CD4-positive, alpha-beta memory T cell (primary cell): ENCODE measurements at regions of chr16 and their contacts with region 1.

Region 1: DNA sequence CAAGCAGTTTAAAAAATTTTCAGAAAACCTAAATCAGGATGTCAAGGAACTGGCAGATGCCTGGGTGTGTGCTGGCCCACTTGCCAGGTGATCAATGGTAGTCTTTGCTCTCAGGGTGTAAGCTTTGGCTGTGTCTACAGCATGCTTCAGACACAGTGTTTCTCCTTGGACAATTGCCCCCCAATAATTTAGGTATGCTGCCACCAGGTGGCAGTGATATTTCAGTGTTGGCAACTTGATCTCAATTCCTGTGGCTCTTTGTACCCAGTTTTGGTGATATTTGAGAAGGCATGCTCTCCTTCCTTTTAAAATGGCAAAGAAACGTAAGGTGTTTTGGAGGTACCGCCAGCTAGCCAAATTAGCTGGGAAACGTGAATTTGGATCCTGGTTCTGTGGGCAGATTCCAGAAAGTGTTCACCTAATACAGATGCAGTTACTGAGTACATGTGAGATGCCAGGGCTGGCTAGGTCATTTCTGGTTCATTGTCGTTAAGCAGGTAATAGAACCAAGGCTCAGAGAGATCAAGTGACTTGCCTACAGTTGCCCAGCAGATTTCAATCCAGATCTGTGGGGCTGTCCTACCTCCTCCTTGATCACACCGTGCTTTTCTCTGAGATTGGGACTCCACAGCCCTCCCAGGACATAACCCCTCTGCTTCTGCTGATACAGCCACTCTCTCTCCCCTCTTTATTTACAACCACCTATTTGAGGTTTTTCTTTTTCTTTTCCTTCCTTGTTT is 155.6 kb upstream of the PLCG2 start:
- DNase-seq: peak in 4 of 5 donors; percentile 52 to 61 (median 58)
- H3K4me3 ChIP-seq: no peak overlapping the region
- H3K4me3 Mint-ChIP-seq: no peak overlapping the region
- H3K27ac ChIP-seq: no peak overlapping the region
- H3K27ac Mint-ChIP-seq: peak overlapping the region; percentile 6 to 89 (median 72)
- H3K4me1 ChIP-seq: peaks cover 6% of the 10 kb centered on the region
- H3K4me1 Mint-ChIP-seq: peaks cover 4 to 9% (median 7%) of the 10 kb centered on the region in 4 donors
- H3K27me3 ChIP-seq: no peaks in the 10 kb centered on the region
- H3K27me3 Mint-ChIP-seq: no peaks in the 10 kb centered on the region

Region 2: DNA sequence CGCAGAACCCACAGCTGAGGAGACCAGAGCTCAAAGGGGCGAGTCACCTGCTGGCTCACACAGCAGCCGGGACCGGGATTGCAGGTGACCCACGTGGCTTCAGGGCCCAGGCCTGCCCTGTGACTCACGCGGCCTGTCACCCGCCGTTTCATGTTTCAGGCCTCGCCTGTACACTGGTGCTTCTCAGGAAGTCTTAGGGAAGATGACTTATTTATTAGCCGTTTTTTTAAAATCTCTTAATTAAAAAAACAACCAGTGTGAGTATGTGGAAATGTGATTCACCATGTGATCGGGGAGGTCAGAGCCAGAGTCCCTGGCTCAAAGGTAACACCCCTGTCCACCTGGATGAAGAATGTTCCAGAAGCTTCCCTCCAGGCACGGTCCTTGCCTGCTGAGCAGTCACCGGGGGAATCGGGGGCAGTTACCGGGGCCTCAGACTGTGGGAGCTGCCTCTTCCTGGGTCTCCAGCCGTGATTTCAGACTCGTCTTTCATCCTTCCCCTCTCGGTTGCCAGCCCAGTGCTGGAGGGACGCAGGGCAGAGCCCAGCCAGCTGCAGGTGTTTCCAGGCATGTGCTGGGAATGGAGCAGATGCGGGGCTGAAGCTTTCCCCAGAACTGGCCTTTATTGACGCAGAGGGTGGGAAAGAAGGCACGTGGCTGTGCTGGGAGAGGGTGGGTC is 129.6 kb before region 1 on chr16:
- CTCF ChIA-PET with region 1: no interaction called
- POLR2A ChIA-PET with region 1: no interaction called
- intact Hi-C with region 1: no loop called
- DNase-seq: no peak
- H3K4me3 ChIP-seq: no peak overlapping the region
- H3K4me3 Mint-ChIP-seq: no peak overlapping the region
- H3K27ac ChIP-seq: no peak overlapping the region
- H3K27ac Mint-ChIP-seq: peak overlapping the region in 5 of 7 donors; percentile 13 to 85 (median 32)
- H3K4me1 ChIP-seq: peaks cover 14% of the 10 kb centered on the region
- H3K4me1 Mint-ChIP-seq: peaks cover 18 to 54% (median 40%) of the 10 kb centered on the region in 4 donors
- H3K27me3 ChIP-seq: no peaks in the 10 kb centered on the region
- H3K27me3 Mint-ChIP-seq: no peaks in the 10 kb centered on the region

Region 3: GRCh38 chr16:81680444-81681275 is 57.1 kb after region 1 on chr16:
- CTCF ChIA-PET with region 1: no interaction called
- POLR2A ChIA-PET with region 1: no interaction called
- intact Hi-C with region 1: no loop called
- DNase-seq: no peak
- H3K4me3 ChIP-seq: no peak overlapping the region
- H3K4me3 Mint-ChIP-seq: no peak overlapping the region
- H3K27ac ChIP-seq: no peak overlapping the region
- H3K27ac Mint-ChIP-seq: peak overlapping the region in 1 of 7 donors; percentile 63
- H3K4me1 ChIP-seq: no peaks in the 10 kb centered on the region
- H3K4me1 Mint-ChIP-seq: peaks cover 3 to 25% (median 11%) of the 10 kb centered on the region in 4 donors
- H3K27me3 ChIP-seq: no peaks in the 10 kb centered on the region
- H3K27me3 Mint-ChIP-seq: no peaks in the 10 kb centered on the region

Region 4: GRCh38 chr16:81696961-81697615 is 73.6 kb after region 1 on chr16:
- CTCF ChIA-PET with region 1: interaction called, 34 read pairs
- POLR2A ChIA-PET with region 1: interaction called, 3 read pairs
- intact Hi-C with region 1: loop called (anchors 1 kb)
- DNase-seq: peak in 3 of 5 donors; percentile 19 to 39 (median 28)
- H3K4me3 ChIP-seq: no peak overlapping the region
- H3K4me3 Mint-ChIP-seq: no peak overlapping the region
- H3K27ac ChIP-seq: no peak overlapping the region
- H3K27ac Mint-ChIP-seq: peak overlapping the region in 3 of 7 donors; percentile 17 to 76 (median 57)
- H3K4me1 ChIP-seq: no peaks in the 10 kb centered on the region
- H3K4me1 Mint-ChIP-seq: peaks cover 0 to 5% (median under 1%) of the 10 kb centered on the region in 4 donors
- H3K27me3 ChIP-seq: no peaks in the 10 kb centered on the region
- H3K27me3 Mint-ChIP-seq: no peaks in the 10 kb centered on the region

Region 5: GRCh38 chr16:81715358-81716196 is 92.0 kb after region 1 on chr16:
- CTCF ChIA-PET with region 1: interaction called, 38 read pairs
- POLR2A ChIA-PET with region 1: interaction called, 13 read pairs
- intact Hi-C with region 1: loop called (anchors 1 kb)
- DNase-seq: peak; percentile 73 to 82 (median 75)
- H3K4me3 ChIP-seq: peak overlapping the region in 1 of 2 donors; percentile 48
- H3K4me3 Mint-ChIP-seq: peak overlapping the region; percentile 74 to 91 (median 84)
- H3K27ac ChIP-seq: peak overlapping the region; percentile 45
- H3K27ac Mint-ChIP-seq: peak overlapping the region; percentile 86 to 97 (median 95)
- H3K4me1 ChIP-seq: peaks cover 49% of the 10 kb centered on the region
- H3K4me1 Mint-ChIP-seq: peaks cover 37 to 54% (median 47%) of the 10 kb centered on the region in 4 donors
- H3K27me3 ChIP-seq: no peaks in the 10 kb centered on the region
- H3K27me3 Mint-ChIP-seq: no peaks in the 10 kb centered on the region

Region 6: DNA sequence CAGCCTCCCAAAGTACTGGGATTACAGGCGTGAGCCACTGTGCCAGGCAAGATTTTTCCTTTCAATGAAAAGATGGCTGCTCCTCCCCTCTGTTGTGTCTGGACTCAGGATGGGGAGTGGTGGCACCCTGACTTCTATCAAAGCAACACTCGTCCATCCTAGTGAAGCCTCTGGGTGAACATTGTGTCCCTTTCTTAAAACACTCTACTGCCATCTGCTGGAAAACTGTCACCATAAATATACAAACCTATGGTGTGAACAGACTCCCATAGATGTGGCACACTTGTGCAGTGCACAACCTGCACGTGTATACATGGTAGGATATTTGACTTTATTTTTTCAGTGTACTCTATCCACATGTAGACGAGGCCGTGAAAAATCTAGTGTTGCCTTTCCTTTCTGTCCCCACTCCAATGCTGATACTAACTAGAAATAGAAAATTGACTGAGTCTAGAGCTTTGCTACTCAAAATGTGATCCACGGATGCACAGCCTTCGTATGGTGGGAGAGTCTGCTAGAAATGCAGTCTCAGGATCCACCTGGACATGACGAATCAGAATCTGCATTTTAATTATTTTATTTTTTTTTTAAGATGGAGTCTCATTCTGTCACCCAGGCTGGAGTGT is 99.7 kb after region 1 on chr16:
- CTCF ChIA-PET with region 1: interaction called, 112 read pairs
- POLR2A ChIA-PET with region 1: interaction called, 13 read pairs
- intact Hi-C with region 1: loop called (anchors 1 kb)
- DNase-seq: peak; percentile 61 to 76 (median 73)
- H3K4me3 ChIP-seq: no peak overlapping the region
- H3K4me3 Mint-ChIP-seq: peak overlapping the region in 1 of 8 donors; percentile 52
- H3K27ac ChIP-seq: no peak overlapping the region
- H3K27ac Mint-ChIP-seq: peak overlapping the region in 4 of 7 donors; percentile 14 to 84 (median 70)
- H3K4me1 ChIP-seq: peaks cover 11% of the 10 kb centered on the region
- H3K4me1 Mint-ChIP-seq: peaks cover 11 to 29% (median 13%) of the 10 kb centered on the region in 4 donors
- H3K27me3 ChIP-seq: no peaks in the 10 kb centered on the region
- H3K27me3 Mint-ChIP-seq: no peaks in the 10 kb centered on the region

Region 7: DNA sequence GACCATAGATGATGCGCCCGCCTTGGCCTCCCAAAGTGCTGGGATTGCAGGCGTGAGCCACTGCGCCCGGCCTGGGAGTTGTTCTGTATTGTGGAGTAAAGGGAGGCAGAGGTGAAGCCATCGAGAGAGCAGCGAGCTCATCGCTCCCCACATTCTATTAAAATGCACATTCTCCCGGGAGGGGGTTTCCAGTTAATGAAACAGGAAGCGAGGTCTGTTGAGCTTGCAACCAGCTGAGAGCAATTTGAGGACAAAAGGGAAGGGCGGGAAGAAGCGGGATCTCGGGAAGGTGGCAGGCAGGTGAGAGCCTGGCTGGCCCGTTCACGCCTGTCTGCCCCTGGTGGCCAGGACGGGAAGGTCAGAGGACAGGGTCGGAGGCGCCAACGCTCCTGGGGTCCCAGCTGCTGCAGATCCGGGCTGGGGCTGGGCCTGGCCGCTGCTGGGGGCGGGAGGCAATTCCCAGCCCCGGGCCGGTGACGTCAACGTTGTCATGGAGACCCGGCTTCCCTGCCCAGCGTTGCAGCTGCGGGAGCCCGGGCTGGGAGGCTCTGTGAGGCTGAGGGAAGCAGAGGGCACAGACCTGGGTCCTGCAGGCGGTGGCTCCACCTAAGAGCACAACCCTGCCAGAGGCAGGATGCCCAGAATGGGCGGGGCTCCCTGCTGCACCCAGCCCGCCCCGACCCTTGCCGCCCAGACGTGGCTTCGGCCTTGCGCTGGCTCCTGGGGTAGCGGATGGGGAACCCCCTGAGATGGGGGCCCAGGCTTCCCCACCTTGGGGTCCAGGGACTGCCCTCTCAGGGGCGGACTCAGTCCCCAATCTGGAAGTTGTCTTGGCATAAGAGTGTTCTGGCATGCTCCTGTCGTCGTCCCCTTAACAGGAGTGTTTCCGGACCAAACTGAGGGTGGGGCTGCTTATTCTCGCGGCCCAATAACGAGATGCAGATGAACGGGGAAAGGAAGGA is 106.8 kb after region 1 on chr16:
- CTCF ChIA-PET with region 1: interaction called, 112 read pairs
- POLR2A ChIA-PET with region 1: no interaction called
- intact Hi-C with region 1: loop called (anchors 2 kb)
- DNase-seq: peak; percentile 42 to 73 (median 58)
- H3K4me3 ChIP-seq: peak overlapping the region; percentile 11 to 25
- H3K4me3 Mint-ChIP-seq: peak overlapping the region; percentile 85 to 93 (median 88)
- H3K27ac ChIP-seq: peak overlapping the region; percentile 65
- H3K27ac Mint-ChIP-seq: peak overlapping the region; percentile 78 to 97 (median 93)
- H3K4me1 ChIP-seq: peaks cover 12% of the 10 kb centered on the region
- H3K4me1 Mint-ChIP-seq: peaks cover 8 to 25% (median 17%) of the 10 kb centered on the region in 4 donors
- H3K27me3 ChIP-seq: no peaks in the 10 kb centered on the region
- H3K27me3 Mint-ChIP-seq: no peaks in the 10 kb centered on the region

Region 8: GRCh38 chr16:81737885-81738786 is 114.6 kb after region 1 on chr16:
- CTCF ChIA-PET with region 1: interaction called, 9 read pairs
- POLR2A ChIA-PET with region 1: no interaction called
- intact Hi-C with region 1: loop called (anchors 1 kb)
- DNase-seq: peak; percentile 80 to 84 (median 81)
- H3K4me3 ChIP-seq: peak overlapping the region in 1 of 2 donors; percentile 3
- H3K4me3 Mint-ChIP-seq: peak overlapping the region; percentile 67 to 82 (median 75)
- H3K27ac ChIP-seq: no peak overlapping the region
- H3K27ac Mint-ChIP-seq: peak overlapping the region in 5 of 7 donors; percentile 22 to 78 (median 30)
- H3K4me1 ChIP-seq: peaks cover 4% of the 10 kb centered on the region
- H3K4me1 Mint-ChIP-seq: peaks cover 0 to 12% (median 7%) of the 10 kb centered on the region in 4 donors
- H3K27me3 ChIP-seq: no peaks in the 10 kb centered on the region
- H3K27me3 Mint-ChIP-seq: no peaks in the 10 kb centered on the region